ENCODE measurements at regions of chr4 and their contacts with region 1.

Region 1: GRCh38 chr4:77819843-77820648 is 878 bp upstream of the CNOT6L start:
- DNase-seq: peak; percentile 95
- ATAC-seq: peak; percentile 75
- H3K4me3 ChIP-seq: peak overlapping the region; percentile 74 to 98 (median 88)
- H3K4me3 Mint-ChIP-seq: peak overlapping the region; percentile 98
- H3K27ac ChIP-seq: peak overlapping the region; percentile 94 to 99
- H3K27ac Mint-ChIP-seq: peak overlapping the region; percentile 99
- H3K4me1 ChIP-seq: peaks cover 42 to 45% of the 10 kb centered on the region in 2 donors
- H3K4me1 Mint-ChIP-seq: peaks cover 49% of the 10 kb centered on the region
- H3K27me3 ChIP-seq: no peaks in the 10 kb centered on the region
- H3K27me3 Mint-ChIP-seq: no peaks in the 10 kb centered on the region
- CTCF ChIP-seq: no peak

Region 2: GRCh38 chr4:77172336-77172735 is 647.7 kb before region 1 on chr4:
- CTCF ChIA-PET with region 1: no interaction called
- POLR2A ChIA-PET with region 1: no interaction called
- intact Hi-C with region 1: no loop called
- DNase-seq: no peak
- ATAC-seq: no peak
- H3K4me3 ChIP-seq: no peak overlapping the region
- H3K4me3 Mint-ChIP-seq: no peak overlapping the region
- H3K27ac ChIP-seq: no peak overlapping the region
- H3K27ac Mint-ChIP-seq: no peak overlapping the region
- H3K4me1 ChIP-seq: no peaks in the 10 kb centered on the region
- H3K4me1 Mint-ChIP-seq: peaks cover 5% of the 10 kb centered on the region
- H3K27me3 ChIP-seq: no peaks in the 10 kb centered on the region
- H3K27me3 Mint-ChIP-seq: no peaks in the 10 kb centered on the region
- CTCF ChIP-seq: no peak

Region 3: GRCh38 chr4:77734928-77735327 is 85.1 kb before region 1 on chr4:
- CTCF ChIA-PET with region 1: no interaction called
- POLR2A ChIA-PET with region 1: no interaction called
- intact Hi-C with region 1: loop called (anchors 1 kb)
- DNase-seq: peak; percentile 45
- ATAC-seq: peak; percentile 41
- H3K4me3 ChIP-seq: no peak overlapping the region
- H3K4me3 Mint-ChIP-seq: peak overlapping the region; percentile 38
- H3K27ac ChIP-seq: no peak overlapping the region
- H3K27ac Mint-ChIP-seq: peak overlapping the region; percentile 51
- H3K4me1 ChIP-seq: peaks cover 13 to 22% of the 10 kb centered on the region in 2 donors
- H3K4me1 Mint-ChIP-seq: peaks cover 42% of the 10 kb centered on the region
- H3K27me3 ChIP-seq: no peaks in the 10 kb centered on the region
- H3K27me3 Mint-ChIP-seq: no peaks in the 10 kb centered on the region
- CTCF ChIP-seq: no peak

Region 4: GRCh38 chr4:77777135-77777807 is 42.8 kb before region 1 on chr4:
- CTCF ChIA-PET with region 1: no interaction called
- POLR2A ChIA-PET with region 1: no interaction called
- intact Hi-C with region 1: loop called (anchors 5 kb)
- DNase-seq: no peak
- ATAC-seq: no peak
- H3K4me3 ChIP-seq: no peak overlapping the region
- H3K4me3 Mint-ChIP-seq: no peak overlapping the region
- H3K27ac ChIP-seq: peak overlapping the region in 1 of 2 donors; percentile 1
- H3K27ac Mint-ChIP-seq: no peak overlapping the region
- H3K4me1 ChIP-seq: peaks cover 0 to 4% of the 10 kb centered on the region in 2 donors
- H3K4me1 Mint-ChIP-seq: peaks cover 37% of the 10 kb centered on the region
- H3K27me3 ChIP-seq: no peaks in the 10 kb centered on the region
- H3K27me3 Mint-ChIP-seq: no peaks in the 10 kb centered on the region
- CTCF ChIP-seq: no peak

Region 5: GRCh38 chr4:77800483-77801259 is 19.4 kb before region 1 on chr4:
- CTCF ChIA-PET with region 1: interaction called, 5 read pairs
- POLR2A ChIA-PET with region 1: interaction called, 4 read pairs
- intact Hi-C with region 1: loop called (anchors 2 kb)
- DNase-seq: no peak
- ATAC-seq: no peak
- H3K4me3 ChIP-seq: peak overlapping the region in 1 of 5 experiments; percentile 3
- H3K4me3 Mint-ChIP-seq: peak overlapping the region; percentile 68
- H3K27ac ChIP-seq: peak overlapping the region in 1 of 2 donors; percentile 60
- H3K27ac Mint-ChIP-seq: peak overlapping the region; percentile 61
- H3K4me1 ChIP-seq: peaks cover 24 to 37% of the 10 kb centered on the region in 2 donors
- H3K4me1 Mint-ChIP-seq: peaks cover 57% of the 10 kb centered on the region
- H3K27me3 ChIP-seq: no peaks in the 10 kb centered on the region
- H3K27me3 Mint-ChIP-seq: no peaks in the 10 kb centered on the region
- CTCF ChIP-seq: no peak

Region 6: DNA sequence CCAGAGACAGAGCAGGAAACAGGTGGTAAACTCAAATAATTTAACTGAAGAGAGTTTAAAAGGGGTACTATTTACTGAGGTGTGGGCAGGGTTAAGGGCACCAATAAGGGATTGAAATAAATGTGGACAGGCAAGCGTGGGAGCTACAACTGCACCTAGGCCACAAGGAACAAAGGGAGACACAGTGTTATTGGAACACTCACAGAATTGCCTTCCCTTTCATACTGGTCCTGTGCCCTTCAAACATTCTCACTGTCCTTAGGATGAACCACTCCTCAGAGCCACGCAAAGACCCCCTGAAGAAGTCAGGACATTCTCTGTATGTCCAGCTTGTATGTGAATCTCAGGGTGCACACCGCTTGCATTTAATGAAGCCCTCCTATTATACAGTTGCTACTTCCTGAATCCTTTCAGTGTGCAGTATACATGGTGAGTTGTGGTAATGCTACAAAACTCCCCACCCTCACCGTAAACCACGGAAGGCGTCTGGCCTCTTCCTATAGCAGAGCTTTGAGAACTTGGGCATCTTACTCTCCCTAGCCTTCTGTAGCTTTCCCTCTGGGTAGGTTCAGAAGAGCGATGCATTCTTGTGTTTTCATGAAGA is 32.9 kb after region 1 on chr4:
- CTCF ChIA-PET with region 1: interaction called, 7 read pairs
- POLR2A ChIA-PET with region 1: interaction called, 16 read pairs
- intact Hi-C with region 1: loop called (anchors 2 kb)
- DNase-seq: peak; percentile 82
- ATAC-seq: peak; percentile 99
- H3K4me3 ChIP-seq: peak overlapping the region in 3 of 5 experiments; percentile 19 to 55 (median 30)
- H3K4me3 Mint-ChIP-seq: peak overlapping the region; percentile 89
- H3K27ac ChIP-seq: peak overlapping the region; percentile 62 to 72
- H3K27ac Mint-ChIP-seq: peak overlapping the region; percentile 96
- H3K4me1 ChIP-seq: peaks cover 45% of the 10 kb centered on the region in 2 donors
- H3K4me1 Mint-ChIP-seq: peaks cover 48% of the 10 kb centered on the region
- H3K27me3 ChIP-seq: no peaks in the 10 kb centered on the region
- H3K27me3 Mint-ChIP-seq: no peaks in the 10 kb centered on the region
- CTCF ChIP-seq: no peak

Region 7: GRCh38 chr4:77862478-77863216 is 42.6 kb after region 1 on chr4 and contains the start of gene MRPL1:
- CTCF ChIA-PET with region 1: interaction called, 24 read pairs
- POLR2A ChIA-PET with region 1: interaction called, 142 read pairs
- intact Hi-C with region 1: loop called (anchors 1 kb)
- DNase-seq: peak; percentile 95
- ATAC-seq: peak; percentile 86
- H3K4me3 ChIP-seq: peak within 1 kb of the TSS; percentile 68 to 98 (median 80)
- H3K4me3 Mint-ChIP-seq: peak within 1 kb of the TSS; percentile 99
- H3K27ac ChIP-seq: peak within 1 kb of the TSS; percentile 99 to 100
- H3K27ac Mint-ChIP-seq: peak within 1 kb of the TSS; percentile 98
- H3K4me1 ChIP-seq: peaks cover 17 to 21% of the 10 kb centered on the region in 2 donors
- H3K4me1 Mint-ChIP-seq: peaks cover 41% of the 10 kb centered on the region
- H3K27me3 ChIP-seq: no peaks in the 10 kb centered on the region
- H3K27me3 Mint-ChIP-seq: no peaks in the 10 kb centered on the region
- CTCF ChIP-seq: no peak
- total RNA-seq, gene MRPL1: 22.7 and 23.3 TPM in 2 replicates

Measured in B cell (primary cell).